ENCODE measurements at regions of chr5 and their contacts with region 1.

Region 1: DNA sequence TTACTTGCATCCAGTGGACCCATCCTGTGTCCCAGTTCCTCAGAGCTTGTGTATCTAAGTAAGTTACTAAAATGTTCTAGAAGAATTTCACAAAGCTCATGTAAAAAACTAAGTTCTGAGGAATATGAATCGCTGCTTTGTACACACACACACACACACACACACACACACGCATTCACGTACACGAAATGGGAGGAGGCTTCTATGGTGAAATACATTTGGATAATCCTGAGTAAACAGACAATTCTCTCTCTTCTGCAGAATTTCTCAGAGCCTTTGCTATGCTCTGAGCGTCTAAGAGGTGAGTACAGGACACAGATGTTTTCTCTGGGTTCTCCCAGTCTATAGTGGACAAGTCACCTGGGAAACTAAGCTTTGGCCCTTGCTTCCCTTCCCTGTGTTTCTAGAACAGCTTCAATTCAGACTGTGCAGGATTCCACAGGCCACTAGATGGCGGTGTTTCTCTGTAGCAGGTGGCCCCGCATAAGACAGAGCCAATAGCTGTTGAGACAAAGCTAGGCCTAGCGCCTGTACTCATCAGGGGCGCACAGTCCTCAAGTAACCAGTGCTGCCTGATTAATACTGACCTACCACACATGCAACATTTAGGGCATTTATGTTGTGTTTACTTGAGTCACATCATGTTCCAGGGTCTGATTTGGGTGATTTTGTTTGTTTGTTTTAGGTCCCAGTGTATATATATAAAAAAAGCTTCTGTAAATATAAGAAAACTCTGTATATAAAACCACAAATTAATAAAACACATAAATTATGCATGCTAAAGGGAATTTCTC is 114.8 kb downstream of the LIFR start:
- DNase-seq: peak; percentile 82 to 92
- ATAC-seq: peak; percentile 99 to 100
- H3K4me3 ChIP-seq: no peak overlapping the region
- H3K27ac ChIP-seq: 0 out of 6 replicates have a peak overlapping the region, but pooled peaks of 1 of the 2 experiments have one; percentile 43
- H3K4me1 ChIP-seq: peaks cover 3% of the 10 kb centered on the region; the same call in 1 of the 3 replicates
- CTCF ChIP-seq: peak; percentile 97
- EP300 ChIP-seq: no peak
- POLR2A ChIP-seq: no peak
- RAD21 ChIP-seq: peak; percentile 99 to 100

Region 2: GRCh38 chr5:38414348-38414747 is 27.3 kb before region 1 on chr5:
- CTCF ChIA-PET with region 1: interaction called, 78 read pairs
- POLR2A ChIA-PET with region 1: no interaction called
- DNase-seq: no peak
- ATAC-seq: no peak
- H3K4me3 ChIP-seq: no peak overlapping the region
- H3K27ac ChIP-seq: no peak overlapping the region
- H3K4me1 ChIP-seq: no peaks in the 10 kb centered on the region
- CTCF ChIP-seq: no peak
- EP300 ChIP-seq: no peak
- POLR2A ChIP-seq: no peak
- RAD21 ChIP-seq: no peak

Region 3: GRCh38 chr5:38468978-38469706 is 27.5 kb after region 1 on chr5:
- CTCF ChIA-PET with region 1: interaction called, 74 read pairs
- POLR2A ChIA-PET with region 1: no interaction called
- DNase-seq: no peak
- ATAC-seq: no peak
- H3K4me3 ChIP-seq: no peak overlapping the region
- H3K27ac ChIP-seq: peak overlapping the region; percentile 45 to 83; a peak in 4 of 6 replicates
- H3K4me1 ChIP-seq: peaks cover 43% of the 10 kb centered on the region
- CTCF ChIP-seq: no peak
- EP300 ChIP-seq: no peak
- POLR2A ChIP-seq: no peak
- RAD21 ChIP-seq: no peak

Region 4: GRCh38 chr5:38556599-38557305 is 115.1 kb after region 1 on chr5 and contains the start of gene LIFR:
- CTCF ChIA-PET with region 1: interaction called, 62 read pairs
- POLR2A ChIA-PET with region 1: interaction called, 4 read pairs
- DNase-seq: peak; percentile 58 to 85
- ATAC-seq: peak; percentile 83 to 88
- H3K4me3 ChIP-seq: peak within 1 kb of the TSS; percentile 96
- H3K27ac ChIP-seq: peak within 1 kb of the TSS; percentile 97 to 99
- H3K4me1 ChIP-seq: peaks cover 14% of the 10 kb centered on the region
- CTCF ChIP-seq: no peak
- EP300 ChIP-seq: no peak
- POLR2A ChIP-seq: peak; percentile 84
- RAD21 ChIP-seq: peak; percentile 12 to 24; a peak in 2 of 5 replicates
- polyA plus RNA-seq, gene LIFR: 6.2 and 7.9 TPM in 2 replicates

Region 5: GRCh38 chr5:38672059-38672788 is 230.6 kb after region 1 on chr5:
- CTCF ChIA-PET with region 1: interaction called, 27 read pairs
- POLR2A ChIA-PET with region 1: no interaction called
- DNase-seq: peak; percentile 48 to 85
- ATAC-seq: peak; percentile 90 to 96
- H3K4me3 ChIP-seq: no peak overlapping the region
- H3K27ac ChIP-seq: peak overlapping the region; percentile 72 to 73
- H3K4me1 ChIP-seq: peaks cover 35% of the 10 kb centered on the region
- CTCF ChIP-seq: no peak
- EP300 ChIP-seq: peak in 1 of 2 experiments; percentile 64; a peak in 2 of 5 replicates
- POLR2A ChIP-seq: no peak
- RAD21 ChIP-seq: peak; percentile 11 to 41; a peak in 3 of 5 replicates

Region 6: GRCh38 chr5:38803246-38803645 is 361.6 kb after region 1 on chr5:
- CTCF ChIA-PET with region 1: interaction called, 242 read pairs
- POLR2A ChIA-PET with region 1: interaction called, 21 read pairs
- DNase-seq: no peak
- ATAC-seq: no peak
- H3K4me3 ChIP-seq: no peak overlapping the region
- H3K27ac ChIP-seq: no peak overlapping the region
- H3K4me1 ChIP-seq: peaks cover 22% of the 10 kb centered on the region
- CTCF ChIP-seq: no peak
- EP300 ChIP-seq: no peak
- POLR2A ChIP-seq: no peak
- RAD21 ChIP-seq: no peak